Mucosa of descending colon (tissue), 3 donors: ENCODE measurements at regions of chr9 and their contacts with region 1.

Region 1: GRCh38 chr9:128927731-128928411 is 7.1 kb downstream of the PHYHD1 start:
- DNase-seq: peak in 2 of 3 donors; percentile 57 to 70
- ATAC-seq: peak; percentile 92
- H3K4me3 ChIP-seq: no peak overlapping the region
- H3K4me1 ChIP-seq: peaks cover 2% of the 10 kb centered on the region
- CTCF ChIP-seq: peak; percentile 75

Region 2: GRCh38 chr9:128625391-128626145 is 302.3 kb before region 1 on chr9:
- intact Hi-C with region 1: no loop called
- DNase-seq: peak in 2 of 3 donors; percentile 39 to 43
- ATAC-seq: peak; percentile 81
- H3K4me3 ChIP-seq: no peak overlapping the region
- H3K4me1 ChIP-seq: no peaks in the 10 kb centered on the region
- CTCF ChIP-seq: no peak

Region 3: DNA sequence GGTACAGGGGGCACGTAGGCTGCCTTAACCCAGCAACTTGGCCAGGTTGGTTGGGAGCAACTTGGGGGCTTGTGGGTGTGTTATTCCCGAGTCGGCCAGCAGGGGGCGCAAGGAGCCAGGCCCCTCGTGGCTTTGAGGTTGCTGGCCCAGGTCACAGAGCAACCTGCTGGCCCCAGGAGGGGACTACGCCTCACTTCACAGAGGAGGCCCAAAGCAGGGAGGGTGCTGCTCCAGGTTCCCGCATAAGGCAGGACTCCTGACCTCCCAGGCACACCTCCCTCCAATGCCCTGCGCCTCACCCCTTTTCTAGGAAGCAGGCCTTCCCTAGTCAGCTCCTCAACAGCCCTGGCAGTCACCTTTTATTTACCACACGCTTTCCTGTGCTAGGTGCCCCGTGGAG is 64.2 kb before region 1 on chr9:
- intact Hi-C with region 1: loop called (anchors 5 kb)
- DNase-seq: peak; percentile 76 to 84 (median 84)
- ATAC-seq: peak; percentile 95
- H3K4me3 ChIP-seq: no peak overlapping the region
- H3K4me1 ChIP-seq: peaks cover 6% of the 10 kb centered on the region
- CTCF ChIP-seq: peak; percentile 91

Region 4: DNA sequence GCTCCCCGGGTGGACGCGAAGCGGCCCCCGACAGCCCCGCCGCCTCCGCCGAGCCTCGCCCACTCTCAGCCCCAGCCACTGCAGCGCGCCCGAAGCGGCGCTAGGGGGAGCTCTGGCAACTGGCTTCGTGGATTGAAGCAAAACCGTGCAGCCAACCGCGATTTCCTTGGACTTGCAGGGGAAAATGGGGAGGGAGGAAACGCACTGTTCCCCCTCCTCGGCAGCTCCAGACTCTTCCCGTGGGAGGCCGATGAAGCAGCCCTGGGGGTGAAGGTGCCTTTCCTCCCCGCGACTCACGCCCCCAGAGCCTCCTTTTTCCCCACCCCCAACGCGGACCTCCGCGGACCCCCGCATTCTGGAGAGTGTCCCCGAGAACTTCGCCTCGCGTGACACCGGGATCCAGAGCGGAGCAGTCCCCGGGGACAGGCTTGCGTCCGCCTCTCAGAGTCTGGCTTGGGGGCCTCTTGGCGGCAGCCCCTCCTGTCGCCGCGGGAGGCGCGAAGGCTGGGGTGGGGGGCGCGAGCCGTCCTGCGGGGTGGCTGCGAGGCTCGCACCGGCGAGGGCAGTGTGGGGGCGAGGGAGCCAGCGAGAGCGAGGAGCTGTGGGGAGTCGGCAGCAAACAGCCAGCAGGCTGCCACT is 246.3 kb after region 1 on chr9:
- intact Hi-C with region 1: no loop called
- DNase-seq: peak; percentile 91 to 95 (median 95)
- ATAC-seq: peak; percentile 57
- H3K4me3 ChIP-seq: peak overlapping the region; percentile 61
- H3K4me1 ChIP-seq: peaks cover 18% of the 10 kb centered on the region
- CTCF ChIP-seq: peak; percentile 99